ENCODE measurements at regions of chr22 and their contacts with region 1.

Region 1: GRCh38 chr22:22207845-22208564 is 36.6 kb upstream of the VPREB1 start:
- DNase-seq: peak; percentile 60 to 87 (median 76)
- ATAC-seq: peak; percentile 77
- H3K4me3 ChIP-seq: no peak overlapping the region
- H3K4me3 Mint-ChIP-seq: no peak overlapping the region
- H3K27ac ChIP-seq: no peak overlapping the region
- H3K27ac Mint-ChIP-seq: peak overlapping the region; percentile 1
- H3K4me1 ChIP-seq: peaks cover 18% of the 10 kb centered on the region
- H3K4me1 Mint-ChIP-seq: peaks cover 33% of the 10 kb centered on the region
- H3K27me3 ChIP-seq: no peaks in the 10 kb centered on the region
- H3K27me3 Mint-ChIP-seq: no peaks in the 10 kb centered on the region
- CTCF ChIP-seq: peak; percentile 78

Region 2: GRCh38 chr22:22058633-22059290 is 149.2 kb before region 1 on chr22:
- CTCF ChIA-PET with region 1: no interaction called
- POLR2A ChIA-PET with region 1: no interaction called
- intact Hi-C with region 1: no loop called
- DNase-seq: no peak
- ATAC-seq: no peak
- H3K4me3 ChIP-seq: no peak overlapping the region
- H3K4me3 Mint-ChIP-seq: no peak overlapping the region
- H3K27ac ChIP-seq: no peak overlapping the region
- H3K27ac Mint-ChIP-seq: no peak overlapping the region
- H3K4me1 ChIP-seq: no peaks in the 10 kb centered on the region
- H3K4me1 Mint-ChIP-seq: no peaks in the 10 kb centered on the region
- H3K27me3 ChIP-seq: peaks cover 15 to 19% of the 10 kb centered on the region in 2 experiments
- H3K27me3 Mint-ChIP-seq: peaks cover 43% of the 10 kb centered on the region
- CTCF ChIP-seq: no peak

Region 3: DNA sequence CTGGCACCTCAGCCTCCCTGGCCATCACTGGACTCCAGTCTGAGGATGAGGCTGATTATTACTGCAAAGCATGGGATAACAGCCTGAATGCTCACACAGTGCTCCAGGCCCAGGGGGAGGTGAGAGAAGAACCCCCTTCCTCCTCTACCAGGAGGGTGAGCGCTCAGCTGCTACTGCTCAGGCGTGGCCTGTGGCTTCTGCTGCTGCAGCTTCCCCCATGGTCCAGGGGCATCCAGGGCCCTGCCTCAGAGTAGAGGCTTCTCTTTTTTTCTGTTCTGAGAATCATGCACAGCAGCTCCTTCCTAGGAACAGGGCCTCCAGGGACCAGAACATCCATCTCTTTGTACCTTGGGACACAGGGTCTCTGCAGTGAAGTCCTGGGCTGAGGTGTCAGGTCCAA is 119.7 kb after region 1 on chr22:
- CTCF ChIA-PET with region 1: no interaction called
- POLR2A ChIA-PET with region 1: no interaction called
- intact Hi-C with region 1: no loop called
- DNase-seq: no peak
- ATAC-seq: no peak
- H3K4me3 ChIP-seq: no peak overlapping the region
- H3K4me3 Mint-ChIP-seq: no peak overlapping the region
- H3K27ac ChIP-seq: no peak overlapping the region
- H3K27ac Mint-ChIP-seq: no peak overlapping the region
- H3K4me1 ChIP-seq: no peaks in the 10 kb centered on the region
- H3K4me1 Mint-ChIP-seq: peaks cover 7% of the 10 kb centered on the region
- H3K27me3 ChIP-seq: peaks cover 5 to 12% of the 10 kb centered on the region in 2 experiments
- H3K27me3 Mint-ChIP-seq: peaks cover 10% of the 10 kb centered on the region
- CTCF ChIP-seq: no peak

Region 4: DNA sequence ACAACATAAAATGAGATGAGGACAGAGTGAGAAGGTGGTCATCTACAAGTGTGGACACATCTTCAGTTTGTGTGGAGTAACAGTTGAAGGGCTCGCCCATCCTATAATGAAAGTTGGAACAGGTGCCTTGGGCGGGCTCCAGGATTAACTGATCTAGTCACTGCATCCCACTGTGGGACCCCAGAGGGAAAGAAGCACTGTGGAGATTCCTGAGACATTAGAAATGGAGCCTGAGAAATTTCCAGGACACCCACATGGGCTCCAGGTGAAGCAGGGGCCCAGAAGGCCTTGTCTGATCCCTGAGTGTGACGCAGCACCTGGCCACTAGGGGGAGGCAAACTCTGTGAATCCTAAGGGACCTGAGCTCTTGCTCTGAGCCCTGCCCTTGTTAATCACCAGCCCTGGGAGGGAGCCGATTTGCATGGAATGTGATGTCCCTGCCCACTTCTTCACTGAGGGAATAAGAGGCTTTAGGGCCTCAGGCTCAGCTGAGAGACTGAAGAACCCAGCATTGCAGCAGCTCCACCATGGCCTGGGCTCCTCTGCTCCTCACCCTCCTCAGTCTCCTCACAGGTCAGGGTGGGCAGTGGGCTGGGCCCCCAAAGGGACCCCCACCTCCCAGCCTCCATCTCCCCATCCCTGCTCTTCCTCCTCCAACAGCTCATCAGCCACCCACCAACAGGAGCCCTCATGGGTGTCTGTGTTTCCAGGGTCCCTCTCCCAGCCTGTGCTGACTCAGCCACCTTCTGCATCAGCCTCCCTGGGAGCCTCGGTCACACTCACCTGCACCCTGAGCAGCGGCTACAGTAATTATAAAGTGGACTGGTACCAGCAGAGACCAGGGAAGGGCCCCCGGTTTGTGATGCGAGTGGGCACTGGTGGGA is 134.9 kb after region 1 on chr22:
- CTCF ChIA-PET with region 1: no interaction called
- POLR2A ChIA-PET with region 1: no interaction called
- intact Hi-C with region 1: loop called (anchors 2 to 10 kb)
- DNase-seq: peak; percentile 38 to 76 (median 58)
- ATAC-seq: no peak
- H3K4me3 ChIP-seq: no peak overlapping the region
- H3K4me3 Mint-ChIP-seq: no peak overlapping the region
- H3K27ac ChIP-seq: no peak overlapping the region
- H3K27ac Mint-ChIP-seq: no peak overlapping the region
- H3K4me1 ChIP-seq: no peaks in the 10 kb centered on the region
- H3K4me1 Mint-ChIP-seq: no peaks in the 10 kb centered on the region
- H3K27me3 ChIP-seq: peaks cover 0 to under 1% of the 10 kb centered on the region in 2 experiments
- H3K27me3 Mint-ChIP-seq: peaks cover 18% of the 10 kb centered on the region
- CTCF ChIP-seq: peak; percentile 98

Region 5: DNA sequence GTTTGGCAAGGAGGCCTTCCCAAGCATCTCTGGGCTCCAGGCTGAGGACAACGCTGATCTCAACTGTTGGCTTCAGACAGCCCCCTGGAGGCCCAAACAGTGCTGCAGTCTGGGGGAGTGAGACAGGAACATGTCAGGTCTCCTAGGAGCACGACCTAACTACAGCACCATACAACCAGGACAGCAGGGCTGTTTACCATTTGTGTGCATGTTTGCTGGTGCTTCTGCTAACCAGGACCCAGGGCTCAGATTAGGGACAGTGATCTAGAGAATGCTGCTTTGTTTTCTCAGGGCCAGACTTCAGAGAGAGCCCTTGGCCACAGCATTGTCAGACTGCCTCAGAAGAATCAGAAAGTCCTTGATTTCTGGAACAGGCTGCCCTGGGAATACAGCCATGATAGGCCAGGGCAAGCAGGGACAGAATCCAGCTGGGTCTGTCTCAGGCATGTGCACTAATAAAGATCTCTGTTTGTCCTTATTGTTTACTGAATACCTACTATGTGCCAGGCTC is 163.1 kb after region 1 on chr22:
- CTCF ChIA-PET with region 1: no interaction called
- POLR2A ChIA-PET with region 1: no interaction called
- intact Hi-C with region 1: no loop called
- DNase-seq: no peak
- ATAC-seq: no peak
- H3K4me3 ChIP-seq: no peak overlapping the region
- H3K4me3 Mint-ChIP-seq: no peak overlapping the region
- H3K27ac ChIP-seq: no peak overlapping the region
- H3K27ac Mint-ChIP-seq: no peak overlapping the region
- H3K4me1 ChIP-seq: no peaks in the 10 kb centered on the region
- H3K4me1 Mint-ChIP-seq: no peaks in the 10 kb centered on the region
- H3K27me3 ChIP-seq: peaks cover 3 to 10% of the 10 kb centered on the region in 2 experiments
- H3K27me3 Mint-ChIP-seq: peaks cover 47% of the 10 kb centered on the region
- CTCF ChIP-seq: no peak

Region 6: DNA sequence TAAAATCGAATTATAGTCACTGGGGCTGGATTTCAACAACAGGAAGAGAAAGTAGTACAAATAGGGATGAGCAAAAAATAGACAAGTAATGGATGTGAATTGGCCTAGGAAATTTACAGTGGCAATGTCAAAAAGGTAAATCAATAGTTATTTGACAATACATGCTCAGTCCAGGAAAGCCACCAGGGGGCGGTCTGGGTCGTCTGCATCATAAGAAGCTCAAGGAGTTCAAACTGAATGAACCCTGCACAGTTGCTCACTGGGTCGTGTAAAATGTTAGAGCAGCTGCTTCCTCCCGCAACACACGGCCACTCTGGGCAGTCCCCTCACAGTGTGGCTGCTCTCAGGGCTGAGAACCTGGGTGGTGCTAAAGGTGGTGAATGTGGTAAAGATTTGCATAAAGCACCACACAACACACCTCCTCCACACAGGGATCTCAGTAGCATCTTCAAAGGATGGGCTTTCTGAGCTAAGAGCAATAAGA is 214.7 kb after region 1 on chr22:
- CTCF ChIA-PET with region 1: no interaction called
- POLR2A ChIA-PET with region 1: no interaction called
- intact Hi-C with region 1: loop called in 1 of 2 experiments (anchors 5 kb)
- DNase-seq: peak; percentile 34 to 72 (median 46)
- ATAC-seq: peak; percentile 55
- H3K4me3 ChIP-seq: no peak overlapping the region
- H3K4me3 Mint-ChIP-seq: no peak overlapping the region
- H3K27ac ChIP-seq: no peak overlapping the region
- H3K27ac Mint-ChIP-seq: no peak overlapping the region
- H3K4me1 ChIP-seq: peaks cover 3% of the 10 kb centered on the region
- H3K4me1 Mint-ChIP-seq: no peaks in the 10 kb centered on the region
- H3K27me3 ChIP-seq: peaks cover 3 to 13% of the 10 kb centered on the region in 2 experiments
- H3K27me3 Mint-ChIP-seq: peaks cover 54% of the 10 kb centered on the region
- CTCF ChIP-seq: peak; percentile 87